ENCODE measurements at regions of chr11 and their contacts with region 1.

Region 1: DNA sequence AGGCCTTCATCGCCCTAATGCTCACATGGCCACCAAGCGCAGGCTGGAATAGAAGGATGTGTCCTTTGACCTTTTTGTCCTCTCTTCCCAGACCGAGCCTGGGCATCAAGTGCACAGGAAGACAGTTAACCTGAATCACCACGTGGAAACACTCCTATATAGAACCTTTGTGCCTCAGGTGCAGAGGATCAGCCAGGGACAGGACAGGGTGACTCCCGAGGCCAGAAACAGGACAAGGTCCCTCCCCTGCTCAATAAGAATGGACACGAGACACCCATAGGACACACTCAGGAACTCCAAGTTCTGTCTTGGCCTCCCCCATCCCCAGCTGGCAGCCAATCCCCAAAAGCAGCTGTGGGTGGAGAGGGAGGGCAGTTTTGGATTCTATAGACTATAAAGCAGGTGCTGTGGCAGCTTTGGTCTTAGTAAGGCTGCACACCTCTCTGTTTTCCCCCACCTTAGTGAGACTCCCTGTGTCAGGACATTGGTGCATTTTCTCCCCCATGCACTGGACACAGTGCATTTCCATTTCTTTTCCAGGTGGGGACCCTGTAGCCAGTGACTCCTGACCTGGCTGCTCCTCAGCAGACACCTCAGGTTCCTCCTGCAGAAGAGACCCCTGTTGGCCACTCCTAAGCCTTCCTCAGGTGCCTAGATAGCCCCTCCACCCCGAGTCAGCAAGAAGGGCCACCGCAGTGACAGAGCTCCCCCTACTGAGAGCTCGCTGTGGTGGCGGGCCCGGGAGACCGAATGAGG is 43.6 kb upstream of the POU2AF1 start:
- DNase-seq: peak; percentile 71
- ATAC-seq: peak; percentile 82

Region 2: DNA sequence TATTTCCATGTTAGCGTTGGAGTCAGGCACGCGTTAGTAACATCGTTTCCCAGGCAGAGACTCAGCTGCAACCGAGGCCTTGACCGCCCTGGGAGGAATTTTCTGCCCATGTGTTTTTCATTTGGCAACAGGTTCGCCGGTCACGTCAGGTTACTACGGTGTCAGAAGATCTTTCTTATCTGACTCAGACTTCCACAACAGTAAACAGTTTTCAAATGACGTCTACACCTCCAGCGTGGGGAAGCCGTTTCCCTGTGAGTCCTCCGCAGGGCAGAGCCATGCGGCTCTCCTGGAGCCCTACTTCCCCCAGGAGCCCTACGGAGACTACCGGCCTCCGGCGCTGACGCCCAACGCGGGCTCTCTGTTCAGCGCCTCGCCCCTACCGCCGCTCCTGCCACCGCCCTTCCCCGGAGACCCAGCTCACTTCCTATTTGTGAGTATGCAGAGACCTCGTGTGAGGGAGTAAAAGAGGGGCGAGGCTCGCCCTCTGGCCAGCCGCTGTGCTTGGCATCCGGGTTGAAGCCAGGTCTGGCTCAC is 138.7 kb before region 1 on chr11:
- intact Hi-C with region 1: loop called (anchors 10 kb)
- DNase-seq: peak; percentile 70
- ATAC-seq: peak; percentile 86